K562 (cell line): ENCODE measurements at regions of chr13 and their contacts with region 1.

Region 1: GRCh38 chr13:28636674-28637317 is 22.1 kb upstream of the POMP start:
- DNase-seq: peak; percentile 35 to 75 (median 42)
- ATAC-seq: peak; percentile 92
- H3K4me3 ChIP-seq: no peak overlapping the region
- H3K27ac ChIP-seq: no peak overlapping the region
- H3K4me1 ChIP-seq: peaks cover 0 to 17% of the 10 kb centered on the region in 2 experiments; a peak in 2 of 5 replicates
- H3K27me3 ChIP-seq: no peaks in the 10 kb centered on the region
- CTCF ChIP-seq: peak; percentile 73 to 85 (median 84)
- EP300 ChIP-seq: 0 out of 2 replicates have a peak, but pooled peaks have one; percentile 24
- POLR2A ChIP-seq: no peak
- RAD21 ChIP-seq: peak; percentile 82 to 92

Region 2: GRCh38 chr13:28058866-28059624 is 577.8 kb before region 1 on chr13:
- CTCF ChIA-PET with region 1: no interaction called
- POLR2A ChIA-PET with region 1: no interaction called
- in situ Hi-C with region 1: no loop called
- intact Hi-C with region 1: loop called (anchors 10 kb)
- DNase-seq: peak; percentile 43 to 54 (median 46)
- ATAC-seq: peak; percentile 82
- H3K4me3 ChIP-seq: no peak overlapping the region
- H3K27ac ChIP-seq: no peak overlapping the region
- H3K4me1 ChIP-seq: no peaks in the 10 kb centered on the region
- H3K27me3 ChIP-seq: peaks cover 2 to 21% of the 10 kb centered on the region in 2 experiments; a peak in 4 of 5 replicates
- CTCF ChIP-seq: peak; percentile 52 to 60 (median 54); a peak in 5 of 6 replicates
- EP300 ChIP-seq: no peak
- POLR2A ChIP-seq: no peak
- RAD21 ChIP-seq: peak; percentile 32 to 71

Region 3: GRCh38 chr13:28324181-28324789 is 312.5 kb before region 1 on chr13:
- CTCF ChIA-PET with region 1: interaction called, 3 read pairs
- POLR2A ChIA-PET with region 1: no interaction called
- in situ Hi-C with region 1: loop called (anchors 10 kb)
- intact Hi-C with region 1: loop called (anchors 1 kb)
- DNase-seq: peak; percentile 43 to 81 (median 62)
- ATAC-seq: peak; percentile 95
- H3K4me3 ChIP-seq: no peak overlapping the region
- H3K27ac ChIP-seq: no peak overlapping the region
- H3K4me1 ChIP-seq: peaks cover 3 to 4% of the 10 kb centered on the region in 2 experiments; a peak in 3 of 5 replicates
- H3K27me3 ChIP-seq: no peaks in the 10 kb centered on the region
- CTCF ChIP-seq: peak; percentile 66 to 77 (median 72)
- EP300 ChIP-seq: no peak
- POLR2A ChIP-seq: no peak
- RAD21 ChIP-seq: peak; percentile 73 to 86

Region 4: DNA sequence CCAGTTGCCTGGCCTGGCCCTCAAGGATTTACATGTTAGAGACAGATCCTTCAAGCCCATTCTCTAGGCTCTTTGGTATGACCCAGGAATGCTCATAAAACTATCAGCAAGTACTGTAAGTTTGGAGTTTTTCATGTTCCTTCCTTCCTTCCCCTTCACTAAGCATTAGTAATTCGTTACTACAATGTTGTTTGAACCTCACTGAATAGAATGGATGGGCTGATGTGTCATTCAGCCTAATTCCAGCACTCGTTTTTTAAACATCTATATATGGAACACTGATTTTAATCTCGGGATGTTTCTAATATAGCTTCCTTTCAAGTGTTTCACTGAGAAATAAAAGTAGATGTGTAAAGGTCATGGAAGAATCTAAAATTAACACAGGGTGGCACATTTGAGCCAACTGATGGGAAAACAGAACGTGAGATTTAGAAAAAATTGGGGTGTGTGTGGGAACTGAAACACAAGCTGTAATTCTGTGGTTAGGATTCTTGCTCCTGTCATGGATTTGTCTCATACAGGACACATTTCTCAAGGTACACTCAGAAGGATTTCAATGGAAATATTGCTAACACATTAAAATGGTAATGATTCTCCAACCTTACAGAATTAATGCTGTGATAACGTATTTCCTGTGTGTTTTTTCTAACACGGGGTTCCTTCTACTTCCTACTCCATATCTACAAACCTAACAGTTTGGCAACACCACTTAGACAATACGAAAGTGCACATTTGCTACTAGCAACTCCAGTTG is 235.3 kb before region 1 on chr13:
- CTCF ChIA-PET with region 1: no interaction called
- POLR2A ChIA-PET with region 1: no interaction called
- in situ Hi-C with region 1: no loop called
- intact Hi-C with region 1: loop called (anchors 10 kb)
- DNase-seq: peak in 1 of 4 experiments; percentile 23
- ATAC-seq: 0 out of 3 replicates have a peak, but pooled peaks have one; percentile 31
- H3K4me3 ChIP-seq: no peak overlapping the region
- H3K27ac ChIP-seq: no peak overlapping the region
- H3K4me1 ChIP-seq: peaks cover 0 to 3% of the 10 kb centered on the region in 2 experiments; a peak in 2 of 5 replicates
- H3K27me3 ChIP-seq: no peaks in the 10 kb centered on the region
- CTCF ChIP-seq: no peak
- EP300 ChIP-seq: no peak
- POLR2A ChIP-seq: no peak
- RAD21 ChIP-seq: no peak

Region 5: DNA sequence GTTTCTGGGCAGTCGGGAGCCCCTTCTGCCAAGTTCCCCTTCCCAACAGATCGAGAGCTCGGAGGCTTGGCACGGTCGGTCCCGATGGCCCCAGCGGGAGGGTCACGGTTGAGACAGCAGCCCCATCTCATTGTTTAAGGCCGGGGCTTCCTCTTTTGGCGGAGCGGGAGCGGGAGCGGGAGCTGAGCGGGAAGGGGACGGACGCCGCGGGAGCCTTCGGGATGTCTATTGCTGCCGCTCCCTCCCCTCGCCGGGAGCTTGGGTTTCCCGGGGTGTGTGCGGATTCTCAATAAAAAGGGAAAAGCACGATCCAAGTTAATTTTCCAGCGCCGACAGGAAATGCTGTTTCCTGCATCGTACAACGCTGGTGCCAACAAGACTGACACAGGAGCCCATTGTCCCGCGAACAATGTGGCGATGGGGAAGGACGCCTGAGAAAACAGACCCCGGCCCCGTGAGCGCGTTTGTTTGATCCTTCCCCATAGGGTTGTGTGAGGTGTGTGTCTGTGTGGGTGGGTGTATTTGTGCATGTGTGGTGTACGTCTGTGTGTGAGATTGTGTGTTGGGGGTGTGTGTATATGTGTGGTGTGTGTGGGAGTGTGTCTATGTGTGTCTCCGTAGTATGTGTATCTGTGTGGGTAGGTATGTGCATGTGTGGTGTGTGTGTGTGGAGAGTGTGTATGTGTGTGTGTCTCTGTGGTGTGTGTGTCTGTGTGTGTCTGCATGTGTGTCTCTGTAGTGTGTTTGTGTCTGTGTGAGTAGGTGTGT is 105.5 kb before region 1 on chr13:
- CTCF ChIA-PET with region 1: no interaction called
- POLR2A ChIA-PET with region 1: no interaction called
- in situ Hi-C with region 1: no loop called
- intact Hi-C with region 1: loop called (anchors 2 kb)
- DNase-seq: no peak
- ATAC-seq: no peak
- H3K4me3 ChIP-seq: no peak overlapping the region
- H3K27ac ChIP-seq: peak overlapping the region; percentile 49; the same call in 1 of the 3 replicates
- H3K4me1 ChIP-seq: peaks cover 4 to 21% of the 10 kb centered on the region in 2 experiments; a peak in 4 of 5 replicates
- H3K27me3 ChIP-seq: no peaks in the 10 kb centered on the region
- CTCF ChIP-seq: no peak
- EP300 ChIP-seq: no peak
- POLR2A ChIP-seq: no peak
- RAD21 ChIP-seq: no peak

Region 6: GRCh38 chr13:28548872-28549271 is 87.9 kb before region 1 on chr13:
- CTCF ChIA-PET with region 1: no interaction called
- POLR2A ChIA-PET with region 1: no interaction called
- in situ Hi-C with region 1: no loop called
- intact Hi-C with region 1: loop called (anchors 1 kb)
- DNase-seq: no peak
- ATAC-seq: no peak
- H3K4me3 ChIP-seq: no peak overlapping the region
- H3K27ac ChIP-seq: no peak overlapping the region
- H3K4me1 ChIP-seq: peaks cover 0 to 5% of the 10 kb centered on the region in 2 experiments; a peak in 2 of 5 replicates
- H3K27me3 ChIP-seq: peaks cover 0 to 5% of the 10 kb centered on the region in 2 experiments; a peak in 1 of 5 replicates
- CTCF ChIP-seq: peak in 2 of 3 experiments; percentile 27 to 34; a peak in 1 of 6 replicates
- EP300 ChIP-seq: no peak
- POLR2A ChIP-seq: no peak
- RAD21 ChIP-seq: peak in 1 of 2 experiments; percentile 51; a peak in 2 of 4 replicates

Region 7: GRCh38 chr13:28574617-28575142 is 62.1 kb before region 1 on chr13:
- CTCF ChIA-PET with region 1: no interaction called
- POLR2A ChIA-PET with region 1: no interaction called
- in situ Hi-C with region 1: no loop called
- intact Hi-C with region 1: loop called (anchors 5 kb)
- DNase-seq: peak; percentile 77 to 91 (median 79)
- ATAC-seq: peak; percentile 79
- H3K4me3 ChIP-seq: no peak overlapping the region; the same call in 1 of the 2 replicates
- H3K27ac ChIP-seq: peak overlapping the region; percentile 81
- H3K4me1 ChIP-seq: peaks cover 0 to 24% of the 10 kb centered on the region in 2 experiments; a peak in 3 of 5 replicates
- H3K27me3 ChIP-seq: no peaks in the 10 kb centered on the region
- CTCF ChIP-seq: no peak
- EP300 ChIP-seq: peak; percentile 95
- POLR2A ChIP-seq: no peak
- RAD21 ChIP-seq: no peak

Region 8: DNA sequence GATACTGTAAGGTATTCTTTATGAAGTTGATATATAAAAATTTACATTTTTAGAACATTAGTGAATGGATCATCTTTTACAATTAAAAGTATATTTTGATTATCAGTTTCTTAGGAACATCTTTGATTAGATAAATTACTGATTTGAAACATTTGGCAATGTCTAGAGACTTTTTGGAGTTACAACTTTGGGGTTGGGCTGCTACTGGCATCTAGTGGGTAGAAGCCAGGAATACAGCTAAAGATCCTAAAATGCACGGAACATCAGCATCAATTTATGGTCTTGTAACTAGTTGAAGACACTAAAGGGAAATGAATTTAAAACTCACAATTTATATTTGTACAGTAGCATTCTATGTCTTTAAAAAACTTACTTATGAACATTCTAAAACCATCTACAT is 42.0 kb after region 1 on chr13:
- CTCF ChIA-PET with region 1: no interaction called
- POLR2A ChIA-PET with region 1: no interaction called
- in situ Hi-C with region 1: no loop called
- intact Hi-C with region 1: no loop called
- DNase-seq: no peak
- ATAC-seq: no peak
- H3K4me3 ChIP-seq: no peak overlapping the region
- H3K27ac ChIP-seq: no peak overlapping the region
- H3K4me1 ChIP-seq: no peaks in the 10 kb centered on the region
- H3K27me3 ChIP-seq: no peaks in the 10 kb centered on the region
- CTCF ChIP-seq: 0 out of 6 replicates have a peak, but pooled peaks of 1 of the 3 experiments have one; percentile 5
- EP300 ChIP-seq: no peak
- POLR2A ChIP-seq: no peak
- RAD21 ChIP-seq: no peak; a peak in 1 of 4 replicates